B cell (primary cell): ENCODE measurements at regions of chr1 and their contacts with region 1.

Region 1: GRCh38 chr1:35769759-35770446 is at the start of gene CLSPN:
- DNase-seq: peak; percentile 94
- ATAC-seq: peak; percentile 95
- H3K4me3 ChIP-seq: peak within 1 kb of the TSS; percentile 75 to 99 (median 87)
- H3K4me3 Mint-ChIP-seq: peak within 1 kb of the TSS; percentile 97
- H3K27ac ChIP-seq: peak within 1 kb of the TSS; percentile 51 to 83
- H3K27ac Mint-ChIP-seq: peak within 1 kb of the TSS; percentile 86
- H3K4me1 ChIP-seq: peaks cover 0 to 12% of the 10 kb centered on the region in 2 donors
- H3K4me1 Mint-ChIP-seq: peaks cover 10% of the 10 kb centered on the region
- H3K27me3 ChIP-seq: no peaks in the 10 kb centered on the region
- H3K27me3 Mint-ChIP-seq: no peaks in the 10 kb centered on the region
- CTCF ChIP-seq: no peak
- total RNA-seq, gene CLSPN: 0.85 and 1.1 TPM in 2 replicates

Region 2: DNA sequence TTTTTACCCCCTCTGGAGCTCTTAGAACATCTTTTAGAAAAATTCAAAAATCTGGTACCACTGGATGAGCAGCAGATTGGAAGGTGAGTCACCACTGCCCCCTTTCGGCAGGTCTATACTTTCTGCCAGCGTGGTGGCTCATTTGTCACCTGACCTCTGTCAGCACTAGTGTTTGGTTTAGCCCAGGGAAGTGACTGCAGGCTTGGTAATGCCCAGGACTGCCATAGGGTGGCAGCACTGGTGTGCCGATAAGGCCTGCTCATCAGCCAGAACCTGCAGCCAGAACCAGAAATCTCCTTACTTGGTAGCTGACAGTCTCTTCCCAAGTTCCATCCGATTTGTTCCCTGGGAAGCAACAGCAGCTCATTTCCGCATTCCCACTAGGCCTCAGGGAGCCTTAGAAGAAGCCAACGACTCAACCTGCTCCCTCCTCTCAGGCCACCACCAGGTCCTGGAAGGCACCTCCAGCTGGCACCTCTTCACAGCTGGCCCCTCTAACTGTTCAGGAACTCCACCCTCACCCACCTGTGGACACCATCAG is 917.2 kb before region 1 on chr1:
- CTCF ChIA-PET with region 1: no interaction called
- POLR2A ChIA-PET with region 1: no interaction called
- intact Hi-C with region 1: loop called (anchors 10 kb)
- DNase-seq: peak; percentile 89
- ATAC-seq: peak; percentile 100
- H3K4me3 ChIP-seq: no peak overlapping the region
- H3K4me3 Mint-ChIP-seq: no peak overlapping the region
- H3K27ac ChIP-seq: no peak overlapping the region
- H3K27ac Mint-ChIP-seq: peak overlapping the region; percentile 41
- H3K4me1 ChIP-seq: peaks cover under 1 to 6% of the 10 kb centered on the region in 2 donors
- H3K4me1 Mint-ChIP-seq: peaks cover 16% of the 10 kb centered on the region
- H3K27me3 ChIP-seq: no peaks in the 10 kb centered on the region
- H3K27me3 Mint-ChIP-seq: no peaks in the 10 kb centered on the region
- CTCF ChIP-seq: peak; percentile 92

Region 3: DNA sequence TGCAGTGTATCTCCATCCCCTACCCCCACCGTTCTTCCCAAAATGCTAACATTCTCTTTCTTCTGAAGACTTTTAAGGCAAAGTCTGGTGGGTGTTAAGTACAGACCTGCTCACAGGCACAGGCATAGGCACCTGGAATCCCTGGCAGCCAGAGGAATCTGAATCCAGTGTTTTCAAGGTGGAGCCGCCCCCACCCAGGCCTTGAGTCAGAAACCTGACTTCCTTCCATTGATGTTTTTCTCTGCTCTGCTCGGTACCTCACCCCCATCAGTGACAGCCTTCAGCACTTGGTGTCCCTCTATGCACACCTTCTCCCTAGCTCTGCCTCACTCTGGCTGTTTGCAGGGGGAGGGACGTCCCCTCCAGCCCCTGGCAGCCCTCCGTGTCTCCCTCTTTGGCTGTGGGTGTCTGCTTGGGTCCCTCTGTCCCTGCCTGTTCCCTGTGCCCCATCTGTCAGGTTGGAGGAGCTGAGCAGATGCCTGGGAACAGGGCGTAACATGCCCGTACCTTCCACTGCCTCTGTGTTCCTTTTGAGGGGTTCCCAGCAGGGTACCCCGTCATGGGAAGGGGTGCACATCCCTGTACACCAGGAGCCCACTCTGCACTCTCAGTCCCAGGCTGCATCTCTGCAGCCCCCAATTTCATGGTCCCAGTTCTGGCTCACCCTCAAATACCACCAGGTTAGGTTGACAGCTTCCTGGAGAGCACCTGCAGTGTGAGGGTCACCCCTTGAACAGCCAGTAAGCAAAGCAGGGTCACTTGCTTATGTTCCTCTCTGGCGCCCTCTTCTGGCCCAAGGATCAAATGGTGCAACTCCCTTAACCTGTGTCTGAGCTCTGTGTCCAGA is 205.6 kb before region 1 on chr1:
- CTCF ChIA-PET with region 1: interaction called, 18 read pairs
- POLR2A ChIA-PET with region 1: no interaction called
- intact Hi-C with region 1: loop called (anchors 1 kb)
- DNase-seq: peak; percentile 82
- ATAC-seq: peak; percentile 71
- H3K4me3 ChIP-seq: no peak overlapping the region
- H3K4me3 Mint-ChIP-seq: no peak overlapping the region
- H3K27ac ChIP-seq: no peak overlapping the region
- H3K27ac Mint-ChIP-seq: no peak overlapping the region
- H3K4me1 ChIP-seq: no peaks in the 10 kb centered on the region
- H3K4me1 Mint-ChIP-seq: peaks cover 17% of the 10 kb centered on the region
- H3K27me3 ChIP-seq: no peaks in the 10 kb centered on the region
- H3K27me3 Mint-ChIP-seq: no peaks in the 10 kb centered on the region
- CTCF ChIP-seq: peak; percentile 85

Region 4: DNA sequence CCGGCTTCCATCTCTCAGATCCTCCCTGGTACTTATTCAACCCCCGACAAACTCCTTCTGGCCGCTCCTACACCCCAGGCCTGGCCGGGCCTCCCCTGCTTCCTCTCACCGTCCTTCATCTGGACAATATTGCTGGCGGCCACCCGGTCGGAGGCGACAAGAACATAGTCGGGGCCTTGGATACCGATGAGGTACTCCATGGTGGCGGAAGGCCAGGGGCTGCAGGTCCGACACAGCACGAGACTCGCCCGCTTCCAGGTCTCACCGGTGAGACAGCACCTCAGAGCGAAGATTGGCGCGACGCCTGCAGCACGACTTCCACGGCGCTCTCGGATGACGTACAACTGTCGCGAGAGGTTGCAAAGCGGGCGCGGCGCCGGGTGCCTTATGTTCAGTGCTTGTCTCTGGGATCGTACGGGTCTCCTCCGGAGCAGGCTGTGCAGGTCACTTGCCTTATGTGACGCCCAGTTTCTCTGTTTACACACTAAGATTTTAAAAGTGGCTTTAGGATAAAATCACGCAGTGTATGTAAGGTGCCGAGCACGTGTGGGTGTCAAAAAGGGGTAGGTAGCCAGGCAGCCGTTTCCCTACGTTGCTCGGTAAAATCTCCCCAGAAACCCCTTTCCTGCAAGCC is 128.6 kb before region 1 on chr1 and contains the start of gene PSMB2:
- CTCF ChIA-PET with region 1: interaction called, 4 read pairs
- POLR2A ChIA-PET with region 1: no interaction called
- intact Hi-C with region 1: loop called (anchors 1 kb)
- DNase-seq: peak; percentile 96
- ATAC-seq: peak; percentile 91
- H3K4me3 ChIP-seq: peak within 1 kb of the TSS; percentile 84 to 97 (median 92)
- H3K4me3 Mint-ChIP-seq: peak within 1 kb of the TSS; percentile 100
- H3K27ac ChIP-seq: peak within 1 kb of the TSS; percentile 75 to 76
- H3K27ac Mint-ChIP-seq: peak within 1 kb of the TSS; percentile 98
- H3K4me1 ChIP-seq: peaks cover 14 to 18% of the 10 kb centered on the region in 2 donors
- H3K4me1 Mint-ChIP-seq: peaks cover 39% of the 10 kb centered on the region
- H3K27me3 ChIP-seq: peaks cover 0 to 21% (median 5%) of the 10 kb centered on the region in 4 experiments
- H3K27me3 Mint-ChIP-seq: peaks cover 23% of the 10 kb centered on the region
- CTCF ChIP-seq: no peak
- total RNA-seq, gene PSMB2: 24.8 and 26.2 TPM in 2 replicates

Region 5: GRCh38 chr1:35715568-35716002 is 54.3 kb before region 1 on chr1:
- CTCF ChIA-PET with region 1: interaction called, 12 read pairs
- POLR2A ChIA-PET with region 1: interaction called, 3 read pairs
- intact Hi-C with region 1: no loop called
- DNase-seq: peak; percentile 79
- ATAC-seq: peak; percentile 59
- H3K4me3 ChIP-seq: no peak overlapping the region
- H3K4me3 Mint-ChIP-seq: peak overlapping the region; percentile 51
- H3K27ac ChIP-seq: no peak overlapping the region
- H3K27ac Mint-ChIP-seq: peak overlapping the region; percentile 54
- H3K4me1 ChIP-seq: peaks cover 10 to 20% of the 10 kb centered on the region in 2 donors
- H3K4me1 Mint-ChIP-seq: peaks cover 29% of the 10 kb centered on the region
- H3K27me3 ChIP-seq: peaks cover 0 to 3% (median 0%) of the 10 kb centered on the region in 4 experiments
- H3K27me3 Mint-ChIP-seq: no peaks in the 10 kb centered on the region
- CTCF ChIP-seq: peak; percentile 98

Region 6: DNA sequence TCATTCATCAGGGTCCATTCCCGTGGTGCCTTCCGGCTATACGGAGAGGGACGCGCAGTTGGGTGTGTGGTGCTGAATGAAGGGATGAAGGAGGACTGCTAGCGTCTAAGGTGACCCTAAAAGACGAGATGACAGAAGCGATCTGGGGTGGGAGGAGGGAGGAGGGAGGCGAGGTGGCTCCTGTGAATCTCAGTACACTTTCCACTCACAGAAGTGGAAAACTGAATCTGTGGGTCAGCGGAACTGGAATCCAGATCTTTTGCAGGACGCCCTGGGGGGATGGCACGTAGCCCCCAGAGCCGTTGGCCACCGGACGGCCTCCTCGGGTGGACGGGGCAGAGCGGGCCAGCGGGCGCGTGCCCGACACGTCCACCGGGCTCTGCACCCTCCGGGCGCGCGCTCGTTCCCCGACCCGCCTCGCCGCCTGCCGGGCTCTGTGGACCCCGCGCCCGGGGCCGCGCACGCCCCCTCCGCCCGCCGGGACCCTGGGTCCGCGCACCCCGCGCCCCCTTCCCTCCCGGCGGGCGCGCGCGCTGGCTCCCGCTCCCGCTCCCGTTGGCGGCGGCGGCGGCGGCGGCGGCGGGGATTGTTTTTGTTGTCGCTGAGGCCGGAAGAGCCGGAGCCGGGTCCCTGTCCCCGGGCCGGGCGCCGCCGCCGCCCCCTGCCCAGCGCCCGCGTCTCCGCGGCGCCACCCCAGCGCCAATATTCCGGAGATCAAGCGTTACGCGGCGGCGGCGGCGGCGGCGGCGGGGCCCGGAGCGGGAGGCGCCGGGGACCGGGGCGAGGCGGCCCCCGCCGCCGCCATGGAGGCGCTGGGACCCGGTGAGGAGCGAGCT is 37.9 kb after region 1 on chr1 and contains the start of gene AGO4:
- CTCF ChIA-PET with region 1: interaction called, 3 read pairs
- POLR2A ChIA-PET with region 1: interaction called, 3 read pairs
- intact Hi-C with region 1: loop called (anchors 1 kb)
- DNase-seq: peak; percentile 54
- ATAC-seq: peak; percentile 66
- H3K4me3 ChIP-seq: peak within 1 kb of the TSS; percentile 73 to 89 (median 81)
- H3K4me3 Mint-ChIP-seq: peak within 1 kb of the TSS; percentile 93
- H3K27ac ChIP-seq: peak within 1 kb of the TSS; percentile 41 to 75
- H3K27ac Mint-ChIP-seq: peak within 1 kb of the TSS; percentile 93
- H3K4me1 ChIP-seq: peaks cover 26 to 33% of the 10 kb centered on the region in 2 donors
- H3K4me1 Mint-ChIP-seq: peaks cover 37% of the 10 kb centered on the region
- H3K27me3 ChIP-seq: no peaks in the 10 kb centered on the region
- H3K27me3 Mint-ChIP-seq: no peaks in the 10 kb centered on the region
- CTCF ChIP-seq: no peak
- total RNA-seq, gene AGO4: 19.1 and 22.6 TPM in 2 replicates